ENCODE measurements at regions of chr20 and their contacts with region 1.

Region 1: DNA sequence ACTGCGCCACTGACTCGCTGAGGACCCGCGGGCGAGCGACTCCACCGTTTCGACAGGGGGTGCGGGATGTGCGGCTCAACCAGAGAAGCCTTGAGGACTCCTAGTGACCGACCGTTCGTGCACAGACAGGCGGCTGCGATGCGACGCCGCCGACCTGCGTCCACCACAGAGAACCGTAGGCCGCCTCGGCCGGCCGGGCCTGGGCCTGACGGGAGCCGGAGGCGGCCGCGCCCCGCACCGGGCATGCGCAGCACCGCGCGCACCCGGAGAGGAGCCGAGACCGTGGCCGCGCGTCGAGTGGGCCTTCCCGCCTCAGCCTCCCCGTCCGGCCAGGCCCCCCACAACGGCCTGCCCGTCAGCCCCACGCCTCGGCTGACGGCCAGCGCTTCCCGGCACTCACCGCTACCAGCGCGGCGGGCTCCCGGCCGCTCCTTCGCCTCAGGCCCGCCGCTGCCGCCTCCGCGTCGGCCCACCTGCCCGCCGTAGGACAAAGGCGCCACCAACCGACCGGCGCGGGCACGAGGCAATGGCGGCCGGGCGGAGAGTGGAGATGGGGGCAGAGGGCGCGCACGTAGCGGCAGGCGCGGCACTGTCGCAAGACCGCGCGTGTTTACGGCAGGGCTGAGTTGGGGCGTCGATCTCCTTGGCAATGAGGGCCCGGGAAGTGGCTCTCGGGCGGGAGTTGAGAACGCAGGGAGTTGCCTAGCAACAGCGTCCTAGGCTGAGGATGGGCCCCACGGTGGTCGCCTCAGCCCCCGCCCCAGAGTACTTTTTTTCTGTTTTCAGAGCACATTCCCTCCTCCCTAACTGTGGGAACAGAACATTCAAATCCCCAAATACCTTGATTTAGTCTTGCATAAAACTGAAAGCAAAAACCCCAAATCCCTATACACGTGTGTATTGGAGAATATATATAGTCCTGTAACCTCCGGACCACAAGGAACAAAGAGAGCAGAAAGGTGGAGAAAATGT is at the start of gene NCOA5:
- DNase-seq: peak; percentile 80 to 92
- H3K4me3 ChIP-seq: peak within 1 kb of the TSS; percentile 78 to 97 (median 84)
- H3K27ac ChIP-seq: peak within 1 kb of the TSS; percentile 99
- H3K4me1 ChIP-seq: peaks cover 0 to 6% (median 2%) of the 10 kb centered on the region in 4 experiments; a peak in 4 of 7 replicates
- H3K27me3 ChIP-seq: no peaks in the 10 kb centered on the region
- CTCF ChIP-seq: peak; percentile 7 to 29 (median 11); a peak in 3 of 4 replicates
- EP300 ChIP-seq: no peak
- POLR2A ChIP-seq: peak; percentile 94 to 95; a peak in 2 of 3 replicates
- RAD21 ChIP-seq: peak; percentile 5 to 35; a peak in 3 of 4 replicates
- total RNA-seq, gene NCOA5: 29.0 and 29.9 TPM in 2 replicates

Region 2: GRCh38 chr20:45934586-45935415 is 154.9 kb before region 1 on chr20 and contains the start of gene PCIF1:
- CTCF ChIA-PET with region 1: no interaction called
- POLR2A ChIA-PET with region 1: no interaction called
- DNase-seq: peak; percentile 91 to 99
- H3K4me3 ChIP-seq: peak within 1 kb of the TSS; percentile 76 to 91 (median 86)
- H3K27ac ChIP-seq: peak within 1 kb of the TSS; percentile 100
- H3K4me1 ChIP-seq: peaks cover 5 to 31% (median 14%) of the 10 kb centered on the region in 4 experiments
- H3K27me3 ChIP-seq: no peaks in the 10 kb centered on the region
- CTCF ChIP-seq: no peak; a peak in 1 of 4 replicates
- EP300 ChIP-seq: peak in 1 of 2 experiments; percentile 21; a peak in 1 of 3 replicates
- POLR2A ChIP-seq: peak; percentile 94 to 95
- RAD21 ChIP-seq: no peak
- total RNA-seq, gene PCIF1: 27.2 and 30.3 TPM in 2 replicates

Region 3: GRCh38 chr20:46078954-46079353 is 10.7 kb before region 1 on chr20:
- CTCF ChIA-PET with region 1: interaction called, 10 read pairs
- POLR2A ChIA-PET with region 1: interaction called, 32 read pairs
- DNase-seq: no peak
- H3K4me3 ChIP-seq: no peak overlapping the region
- H3K27ac ChIP-seq: no peak overlapping the region
- H3K4me1 ChIP-seq: peaks cover 0 to 12% (median 4%) of the 10 kb centered on the region in 4 experiments; a peak in 5 of 7 replicates
- H3K27me3 ChIP-seq: no peaks in the 10 kb centered on the region
- CTCF ChIP-seq: no peak
- EP300 ChIP-seq: no peak
- POLR2A ChIP-seq: no peak
- RAD21 ChIP-seq: no peak

Region 4: GRCh38 chr20:46139908-46140482 is 50.3 kb after region 1 on chr20:
- CTCF ChIA-PET with region 1: no interaction called
- POLR2A ChIA-PET with region 1: no interaction called
- DNase-seq: no peak
- H3K4me3 ChIP-seq: no peak overlapping the region
- H3K27ac ChIP-seq: no peak overlapping the region
- H3K4me1 ChIP-seq: peaks cover 3 to 18% (median 11%) of the 10 kb centered on the region in 4 experiments
- H3K27me3 ChIP-seq: no peaks in the 10 kb centered on the region
- CTCF ChIP-seq: no peak
- EP300 ChIP-seq: no peak
- POLR2A ChIP-seq: no peak
- RAD21 ChIP-seq: no peak

Region 5: GRCh38 chr20:46168438-46168837 is 78.7 kb after region 1 on chr20:
- CTCF ChIA-PET with region 1: no interaction called
- POLR2A ChIA-PET with region 1: no interaction called
- DNase-seq: no peak
- H3K4me3 ChIP-seq: no peak overlapping the region
- H3K27ac ChIP-seq: no peak overlapping the region
- H3K4me1 ChIP-seq: no peaks in the 10 kb centered on the region
- H3K27me3 ChIP-seq: peaks cover 2 to 13% (median 10%) of the 10 kb centered on the region in 4 experiments
- CTCF ChIP-seq: no peak
- EP300 ChIP-seq: no peak
- POLR2A ChIP-seq: no peak
- RAD21 ChIP-seq: no peak

Region 6: DNA sequence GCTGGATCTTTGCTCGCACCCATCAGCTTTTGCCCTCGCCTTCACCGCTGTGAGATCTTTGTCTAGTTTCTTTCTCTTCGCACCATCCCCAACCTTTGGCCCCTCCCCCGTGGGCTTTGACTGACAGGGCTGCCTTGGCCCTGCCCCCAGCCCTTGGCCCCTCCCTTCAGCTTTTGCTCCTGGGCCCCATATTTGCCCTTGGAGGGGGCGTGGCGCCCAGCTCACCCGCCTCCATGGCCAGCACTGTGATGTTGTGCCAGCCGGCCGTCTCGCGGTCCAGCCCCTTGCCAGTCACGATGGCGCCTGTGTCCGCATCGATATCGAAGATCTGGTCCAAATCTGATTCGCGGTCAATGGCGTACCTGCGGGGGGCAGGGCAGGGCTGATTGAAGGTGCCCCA is 109.5 kb after region 1 on chr20:
- CTCF ChIA-PET with region 1: no interaction called
- POLR2A ChIA-PET with region 1: no interaction called
- DNase-seq: peak; percentile 41 to 95
- H3K4me3 ChIP-seq: peak overlapping the region; percentile 23 to 56 (median 40); a peak in 6 of 8 replicates
- H3K27ac ChIP-seq: no peak overlapping the region
- H3K4me1 ChIP-seq: peaks cover 0 to 21% (median 6%) of the 10 kb centered on the region in 4 experiments; a peak in 4 of 7 replicates
- H3K27me3 ChIP-seq: peaks cover 0 to 8% (median 0%) of the 10 kb centered on the region in 4 experiments; a peak in 2 of 7 replicates
- CTCF ChIP-seq: no peak
- EP300 ChIP-seq: no peak
- POLR2A ChIP-seq: peak in 1 of 2 experiments; percentile 46; a peak in 1 of 3 replicates
- RAD21 ChIP-seq: no peak

Measured in H1 (cell line).